Panc1 (cell line): ENCODE measurements at regions of chr3 and their contacts with region 1.

Region 1: DNA sequence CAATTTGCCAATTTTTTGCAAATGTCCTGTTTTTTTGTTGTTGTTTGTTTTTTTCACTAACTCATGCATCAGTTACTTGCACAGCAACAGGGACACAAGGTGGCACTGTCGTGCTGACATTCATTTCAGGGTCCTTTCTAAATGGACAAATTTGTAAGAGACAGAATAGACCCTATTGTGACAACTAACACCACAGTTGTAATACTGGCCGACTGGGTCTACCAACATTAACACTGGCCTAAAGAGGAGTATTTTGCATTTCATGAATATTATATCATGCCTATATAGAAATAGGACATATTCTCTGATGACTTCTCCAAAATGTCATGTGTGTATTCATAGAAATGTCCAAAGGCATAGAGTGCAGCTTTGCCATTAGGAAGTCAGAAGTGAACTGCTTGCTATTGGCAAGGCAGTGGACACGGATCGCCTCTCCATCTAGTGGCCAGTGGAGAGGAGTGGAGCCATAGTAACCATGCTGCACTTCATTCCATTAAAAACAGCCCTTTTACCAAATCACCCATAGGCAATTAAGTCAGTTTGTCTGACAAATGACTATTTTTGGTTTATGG is 54.8 kb downstream of the ZBTB20 start:
- DNase-seq: peak; percentile 32
- ATAC-seq: peak; percentile 99
- H3K4me3 ChIP-seq: no peak overlapping the region
- H3K27ac ChIP-seq: no peak overlapping the region
- H3K4me1 ChIP-seq: no peaks in the 10 kb centered on the region
- H3K27me3 ChIP-seq: no peaks in the 10 kb centered on the region
- CTCF ChIP-seq: peak; percentile 85

Region 2: DNA sequence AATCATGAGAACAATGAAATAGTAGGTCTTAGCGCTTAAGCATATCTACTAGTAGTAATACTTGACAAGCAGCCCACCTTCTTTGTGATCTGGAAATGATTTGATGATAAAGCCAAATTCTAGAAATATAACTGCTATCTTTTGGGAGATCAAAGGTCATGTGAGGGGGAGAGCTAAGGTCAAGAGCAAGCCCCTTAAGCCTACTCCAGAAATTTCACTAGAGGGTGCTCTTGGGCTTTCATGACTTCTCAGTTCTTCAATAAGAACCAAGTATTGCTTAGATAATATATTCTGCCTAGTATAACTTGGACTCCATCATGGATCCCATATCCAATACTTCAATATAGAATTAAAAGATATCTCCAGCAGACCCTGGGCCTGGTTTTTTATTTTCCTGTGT is 264.8 kb before region 1 on chr3:
- CTCF ChIA-PET with region 1: no interaction called
- POLR2A ChIA-PET with region 1: no interaction called
- in situ Hi-C with region 1: no loop called
- intact Hi-C with region 1: loop called (anchors 2 kb)
- DNase-seq: peak; percentile 22
- ATAC-seq: peak; percentile 76; the same call in 1 of the 2 replicates
- H3K4me3 ChIP-seq: no peak overlapping the region
- H3K27ac ChIP-seq: no peak overlapping the region
- H3K4me1 ChIP-seq: no peaks in the 10 kb centered on the region
- H3K27me3 ChIP-seq: no peaks in the 10 kb centered on the region
- CTCF ChIP-seq: peak; percentile 48; the same call in 1 of the 2 replicates

Region 3: DNA sequence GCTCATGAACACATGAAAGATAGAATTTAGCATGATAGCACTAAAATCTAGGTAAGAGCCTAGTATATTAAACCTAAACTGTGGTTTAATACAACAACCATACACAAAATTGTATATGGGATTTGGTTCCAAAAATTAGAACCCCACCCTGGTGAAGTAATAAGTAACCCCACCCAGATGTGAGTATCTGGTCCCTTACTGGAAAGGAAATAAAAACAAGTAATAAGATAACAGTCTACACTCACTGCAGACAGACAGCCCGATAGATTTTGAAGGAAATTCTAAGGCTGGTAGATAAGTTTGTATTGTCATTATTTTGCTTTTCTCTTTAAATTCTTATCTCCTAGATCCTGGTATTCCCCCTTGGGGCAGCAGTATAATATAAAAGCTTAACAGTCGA is 130.1 kb before region 1 on chr3:
- CTCF ChIA-PET with region 1: no interaction called
- POLR2A ChIA-PET with region 1: no interaction called
- in situ Hi-C with region 1: no loop called
- intact Hi-C with region 1: no loop called
- DNase-seq: no peak
- ATAC-seq: no peak
- H3K4me3 ChIP-seq: no peak overlapping the region
- H3K27ac ChIP-seq: no peak overlapping the region
- H3K4me1 ChIP-seq: no peaks in the 10 kb centered on the region
- H3K27me3 ChIP-seq: no peaks in the 10 kb centered on the region
- CTCF ChIP-seq: no peak

Region 4: DNA sequence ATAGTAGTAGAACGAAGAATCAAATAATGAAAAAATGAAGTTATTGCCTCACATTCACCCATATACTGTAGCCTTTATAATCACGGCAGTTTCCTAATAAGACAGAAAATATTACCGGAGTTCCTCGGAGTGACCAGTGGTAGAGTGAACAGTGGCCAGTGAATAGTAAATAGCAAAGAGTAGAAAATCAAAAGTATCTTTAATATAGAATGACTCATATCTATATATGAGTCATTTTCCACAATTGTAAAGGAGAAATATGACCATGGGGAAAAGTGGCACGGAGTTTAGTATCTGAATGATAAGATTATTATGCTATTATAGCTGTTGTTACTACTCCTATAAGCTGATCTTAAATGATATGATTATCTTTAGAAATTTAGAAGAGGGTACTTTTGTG is 16.3 kb after region 1 on chr3:
- CTCF ChIA-PET with region 1: no interaction called
- POLR2A ChIA-PET with region 1: no interaction called
- in situ Hi-C with region 1: no loop called
- intact Hi-C with region 1: no loop called
- DNase-seq: no peak
- ATAC-seq: no peak
- H3K4me3 ChIP-seq: no peak overlapping the region
- H3K27ac ChIP-seq: no peak overlapping the region
- H3K4me1 ChIP-seq: no peaks in the 10 kb centered on the region
- H3K27me3 ChIP-seq: no peaks in the 10 kb centered on the region
- CTCF ChIP-seq: no peak

Region 5: GRCh38 chr3:115169808-115170207 is 77.5 kb after region 1 on chr3:
- CTCF ChIA-PET with region 1: no interaction called
- POLR2A ChIA-PET with region 1: no interaction called
- in situ Hi-C with region 1: no loop called
- intact Hi-C with region 1: loop called (anchors 1 kb)
- DNase-seq: no peak
- ATAC-seq: no peak
- H3K4me3 ChIP-seq: no peak overlapping the region
- H3K27ac ChIP-seq: no peak overlapping the region
- H3K4me1 ChIP-seq: no peaks in the 10 kb centered on the region
- H3K27me3 ChIP-seq: no peaks in the 10 kb centered on the region
- CTCF ChIP-seq: no peak; the same call in 1 of the 2 replicates

Region 6: GRCh38 chr3:115226844-115227445 is 134.6 kb after region 1 on chr3:
- CTCF ChIA-PET with region 1: no interaction called
- POLR2A ChIA-PET with region 1: no interaction called
- in situ Hi-C with region 1: no loop called
- intact Hi-C with region 1: no loop called
- DNase-seq: no peak
- ATAC-seq: no peak
- H3K4me3 ChIP-seq: no peak overlapping the region
- H3K27ac ChIP-seq: no peak overlapping the region
- H3K4me1 ChIP-seq: no peaks in the 10 kb centered on the region
- H3K27me3 ChIP-seq: no peaks in the 10 kb centered on the region
- CTCF ChIP-seq: no peak

Region 7: GRCh38 chr3:115341208-115341607 is 248.9 kb after region 1 on chr3:
- CTCF ChIA-PET with region 1: no interaction called
- POLR2A ChIA-PET with region 1: no interaction called
- in situ Hi-C with region 1: no loop called
- intact Hi-C with region 1: no loop called
- DNase-seq: no peak
- ATAC-seq: no peak
- H3K4me3 ChIP-seq: no peak overlapping the region
- H3K27ac ChIP-seq: no peak overlapping the region
- H3K4me1 ChIP-seq: no peaks in the 10 kb centered on the region
- H3K27me3 ChIP-seq: no peaks in the 10 kb centered on the region
- CTCF ChIP-seq: no peak

Region 8: GRCh38 chr3:115692887-115693524 is 600.7 kb after region 1 on chr3:
- CTCF ChIA-PET with region 1: no interaction called
- POLR2A ChIA-PET with region 1: no interaction called
- in situ Hi-C with region 1: no loop called
- intact Hi-C with region 1: loop called (anchors 2 kb)
- DNase-seq: peak; percentile 59
- ATAC-seq: peak; percentile 97
- H3K4me3 ChIP-seq: no peak overlapping the region
- H3K27ac ChIP-seq: no peak overlapping the region
- H3K4me1 ChIP-seq: no peaks in the 10 kb centered on the region
- H3K27me3 ChIP-seq: no peaks in the 10 kb centered on the region
- CTCF ChIP-seq: peak; percentile 90